ENCODE measurements at regions of chr2 and their contacts with region 1.

Region 1: GRCh38 chr2:72137498-72138010 is 10.1 kb downstream of the CYP26B1 start:
- ATAC-seq: peak; percentile 20 to 87 (median 76)
- H3K4me3 ChIP-seq: no peak overlapping the region
- H3K27ac ChIP-seq: no peak overlapping the region
- H3K4me1 ChIP-seq: peaks cover 7 to 18% of the 10 kb centered on the region in 2 donors

Region 2: GRCh38 chr2:71558300-71559051 is 579.1 kb before region 1 on chr2:
- in situ Hi-C with region 1: loop called in 1 of 9 experiments (anchors 25 kb)
- ATAC-seq: peak in 5 of 8 experiments; percentile 5 to 81 (median 47)
- H3K4me3 ChIP-seq: no peak overlapping the region
- H3K27ac ChIP-seq: no peak overlapping the region
- H3K4me1 ChIP-seq: peaks cover 20 to 36% of the 10 kb centered on the region in 2 donors

Region 3: DNA sequence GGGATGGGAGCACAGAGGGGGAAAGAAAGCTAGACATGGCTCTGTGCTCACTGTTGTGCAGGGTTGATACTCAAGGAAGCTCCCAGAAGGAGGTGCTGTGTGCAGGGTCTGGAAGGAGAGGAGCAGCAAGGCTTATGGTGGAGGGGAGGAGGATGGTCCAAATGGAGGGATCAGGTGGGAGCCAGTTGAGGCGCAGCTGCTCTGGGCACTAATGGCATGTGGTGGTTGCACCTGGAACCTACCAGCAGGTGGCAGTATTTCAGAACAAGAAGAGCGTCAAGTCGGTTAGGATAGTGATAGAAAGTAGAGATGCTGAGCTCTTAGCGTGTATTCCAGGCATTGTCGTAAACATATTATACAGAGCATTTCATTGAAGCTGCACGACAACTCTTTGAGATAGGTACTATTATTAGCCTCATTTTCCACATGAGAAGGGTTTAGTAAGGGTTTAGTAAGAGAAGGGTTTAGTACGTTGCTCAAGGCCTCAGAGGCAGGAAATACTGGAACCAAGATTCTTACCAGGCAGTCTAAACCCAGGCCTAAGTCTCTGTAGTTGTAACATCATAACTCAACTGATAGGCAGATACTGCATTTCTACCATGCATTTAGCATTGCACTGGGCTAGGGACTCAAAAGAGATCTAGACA is 213.5 kb before region 1 on chr2:
- in situ Hi-C with region 1: loop called in 4 of 9 experiments (anchors 10 to 25 kb)
- ATAC-seq: peak; percentile 35 to 98 (median 71)
- H3K4me3 ChIP-seq: no peak overlapping the region
- H3K27ac ChIP-seq: no peak overlapping the region
- H3K4me1 ChIP-seq: peaks cover 0 to 2% of the 10 kb centered on the region in 2 donors

Region 4: GRCh38 chr2:71933467-71934319 is 203.9 kb before region 1 on chr2:
- in situ Hi-C with region 1: loop called in 4 of 9 experiments (anchors 10 to 25 kb)
- ATAC-seq: peak in 1 of 8 experiments; percentile 83
- H3K4me3 ChIP-seq: no peak overlapping the region
- H3K27ac ChIP-seq: no peak overlapping the region
- H3K4me1 ChIP-seq: no peaks in the 10 kb centered on the region

Measured in motor neuron (in vitro differentiated cells).